Right ventricle myocardium superior (tissue), 1 donor: ENCODE measurements at regions of chr4 and their contacts with region 1.

Region 1: DNA sequence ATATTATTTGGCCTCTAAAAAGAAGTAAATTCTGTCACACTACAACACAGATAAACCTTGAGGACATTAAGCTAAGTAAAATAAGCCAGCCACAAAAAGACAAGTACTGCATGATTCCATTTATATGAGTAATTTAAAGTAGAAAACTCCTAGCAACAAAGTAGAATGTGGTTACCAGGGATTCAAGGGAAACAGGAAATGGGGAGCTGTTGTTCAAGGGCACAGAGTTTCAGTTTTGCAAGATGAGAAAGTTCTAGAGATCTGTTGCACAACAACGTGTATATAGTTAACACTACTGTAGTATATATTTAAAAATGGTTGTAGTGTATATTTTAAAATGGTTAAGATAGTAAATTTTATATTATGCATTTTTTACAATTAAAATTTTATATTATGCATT is 25.4 kb downstream of the SEC31A start:
- DNase-seq: no peak
- ATAC-seq: peak; percentile 46

Region 2: GRCh38 chr4:82823062-82823461 is 42.5 kb before region 1 on chr4:
- intact Hi-C with region 1: loop called (anchors 10 kb)
- DNase-seq: no peak
- ATAC-seq: no peak

Region 3: DNA sequence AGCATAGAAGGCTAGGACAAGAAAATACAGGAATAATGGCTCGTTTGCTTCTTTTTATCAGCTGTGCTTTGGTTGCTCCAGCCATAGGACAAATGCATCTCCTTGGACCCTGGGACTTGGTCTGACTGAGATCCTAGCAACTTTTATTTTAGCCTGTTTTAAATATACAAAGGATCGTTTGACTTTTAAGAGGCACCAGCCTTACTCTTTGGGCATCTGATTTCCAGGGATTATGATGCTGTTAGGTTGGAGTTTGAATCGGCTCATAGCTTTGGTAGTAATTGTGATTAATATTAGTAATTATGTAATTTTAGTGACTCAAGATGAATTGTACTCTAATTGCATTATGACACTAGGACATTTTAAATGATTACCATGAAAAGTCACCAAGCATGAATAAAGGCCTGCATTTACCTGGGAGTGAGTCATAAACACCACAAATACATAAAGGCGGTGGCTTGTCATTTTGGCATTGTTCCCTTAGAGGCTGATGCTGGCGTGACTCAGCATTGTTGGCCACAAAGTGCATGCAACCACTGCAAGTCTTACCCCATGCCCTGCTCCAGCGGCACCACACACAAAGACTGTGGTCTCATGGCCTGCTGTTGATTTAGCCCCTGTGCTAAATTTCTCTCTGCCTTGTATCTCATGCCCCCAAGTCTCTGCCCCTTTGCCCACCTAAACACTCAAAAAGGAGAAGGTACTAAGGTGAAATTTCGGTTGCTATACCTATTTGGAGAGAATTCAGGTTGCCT is 682.7 kb after region 1 on chr4:
- intact Hi-C with region 1: no loop called
- DNase-seq: peak; percentile 72
- ATAC-seq: peak; percentile 82